AG04449 (cell line): ENCODE measurements at regions of chr9 and their contacts with region 1.

Region 1: DNA sequence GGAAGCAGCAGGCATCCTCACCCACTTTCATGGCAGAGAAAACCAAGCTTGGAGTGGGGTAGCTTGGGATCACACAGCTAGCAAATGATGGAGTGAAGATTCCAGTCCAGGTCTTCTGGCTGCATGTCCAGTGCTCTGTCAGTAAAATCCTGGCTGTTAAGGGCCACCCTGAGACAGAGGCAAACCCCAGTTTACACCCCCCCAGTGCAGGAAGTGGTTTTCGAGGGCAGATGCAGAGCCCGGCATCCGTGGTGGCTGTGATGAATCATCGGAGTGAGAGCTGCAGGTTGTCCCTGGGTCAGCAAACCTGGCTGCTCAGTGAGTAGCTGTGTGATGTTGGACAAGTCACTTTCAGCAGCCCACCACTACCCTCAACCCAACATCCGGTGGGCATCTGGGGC is 115.4 kb downstream of the RGS3 start:
- DNase-seq: peak; percentile 74
- H3K4me3 ChIP-seq: no peak overlapping the region
- CTCF ChIP-seq: no peak

Region 2: GRCh38 chr9:113387560-113388230 is 191.2 kb before region 1 on chr9:
- CTCF ChIA-PET with region 1: no interaction called
- POLR2A ChIA-PET with region 1: no interaction called
- DNase-seq: no peak
- H3K4me3 ChIP-seq: no peak overlapping the region
- CTCF ChIP-seq: no peak

Region 3: DNA sequence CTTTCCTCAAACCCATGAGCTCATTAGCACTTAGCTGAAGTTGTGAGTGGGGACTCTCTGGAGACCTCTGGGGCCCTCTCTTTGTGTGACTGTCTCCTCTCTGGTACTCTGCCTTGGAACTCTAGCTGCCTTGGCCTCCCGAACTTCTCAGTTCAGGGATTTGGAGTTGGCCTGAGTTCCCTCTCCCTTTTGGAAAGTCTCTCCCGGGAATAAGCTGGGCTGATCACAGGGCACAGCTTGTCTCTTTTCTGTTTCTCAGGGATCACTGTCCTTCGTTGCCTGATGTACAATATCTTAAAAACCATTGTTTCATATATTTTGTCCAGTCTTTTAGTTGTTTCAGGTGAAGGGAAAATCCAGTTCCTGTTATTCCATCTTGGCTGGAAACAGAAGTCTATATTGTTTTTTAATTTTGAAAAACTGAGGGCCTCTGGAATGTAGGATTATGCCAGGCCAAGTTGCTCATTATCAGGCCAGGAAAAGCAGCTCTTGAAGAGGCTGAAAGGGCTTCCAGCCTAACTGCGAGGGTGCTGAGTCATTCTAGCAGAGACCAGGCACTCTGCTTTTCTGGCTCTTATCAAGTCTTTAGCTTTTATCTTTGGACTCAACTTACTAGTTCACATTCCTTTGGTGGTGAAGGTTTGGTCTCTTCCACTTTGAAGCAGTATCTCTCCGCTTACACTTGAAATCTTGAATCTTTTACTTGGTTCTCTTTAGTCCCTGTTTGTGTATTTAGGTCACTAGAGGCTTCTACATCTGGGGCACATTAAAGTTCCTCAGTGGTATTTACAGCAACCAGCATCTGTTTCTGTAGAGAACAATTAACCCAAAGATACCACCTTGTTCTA is 123.7 kb before region 1 on chr9:
- CTCF ChIA-PET with region 1: interaction called, 405 read pairs
- POLR2A ChIA-PET with region 1: interaction called, 12 read pairs
- DNase-seq: peak; percentile 67
- H3K4me3 ChIP-seq: no peak overlapping the region
- CTCF ChIP-seq: no peak

Region 4: DNA sequence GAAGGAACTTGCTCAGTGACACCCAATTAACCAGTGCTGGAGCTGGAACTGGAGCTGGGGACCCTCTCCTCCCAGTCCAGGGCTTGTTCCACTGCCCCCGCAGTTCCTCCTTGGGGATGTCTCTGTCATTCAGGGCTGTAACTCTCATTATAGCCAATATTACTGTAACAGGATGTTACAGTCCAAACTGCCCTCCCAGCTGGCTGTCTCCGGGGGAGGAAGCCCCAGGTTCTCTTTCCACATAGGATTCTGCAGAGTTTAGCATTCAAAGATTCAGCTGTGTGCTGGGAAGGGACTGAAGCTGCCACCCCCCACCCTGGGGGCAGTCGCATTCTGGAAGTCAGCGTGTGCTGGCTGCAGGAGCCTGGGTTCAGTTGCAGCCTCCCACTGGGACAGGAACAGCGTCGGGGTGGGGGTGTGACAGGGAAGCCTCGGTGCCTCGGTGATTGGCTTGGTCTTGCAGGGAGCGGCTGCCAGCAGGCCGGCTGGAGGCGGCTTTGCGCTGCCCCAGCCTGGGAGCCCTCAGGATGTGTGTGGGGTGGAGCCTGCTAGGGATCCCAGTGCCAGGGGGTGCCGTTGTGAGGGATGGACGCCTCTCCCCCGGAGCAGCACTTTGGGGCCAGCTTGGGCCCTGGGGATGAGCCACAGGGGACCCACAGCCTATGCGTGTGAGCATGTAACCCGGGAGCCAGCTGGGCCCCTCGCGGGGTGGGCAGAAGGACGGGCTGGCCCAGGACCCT is 14.2 kb before region 1 on chr9:
- CTCF ChIA-PET with region 1: interaction called, 8 read pairs
- POLR2A ChIA-PET with region 1: interaction called, 22 read pairs
- DNase-seq: no peak
- H3K4me3 ChIP-seq: peak overlapping the region; percentile 74
- CTCF ChIP-seq: peak; percentile 6